Heart left ventricle (tissue), 16 donors: ENCODE measurements at regions of chr5 and their contacts with region 1.

Region 1: GRCh38 chr5:671459-672328 is 21.5 kb downstream of the TPPP start:
- DNase-seq: peak; percentile 68 to 86 (median 80)
- ATAC-seq: peak; percentile 52 to 85 (median 73)
- H3K4me3 ChIP-seq: peak overlapping the region in 6 of 12 donors; percentile 2 to 35 (median 20)
- H3K27ac ChIP-seq: peak overlapping the region in 7 of 12 donors; percentile 31 to 85 (median 73)
- H3K4me1 ChIP-seq: peaks cover 12 to 56% (median 35%) of the 10 kb centered on the region in 12 donors
- H3K27me3 ChIP-seq: peaks cover 0 to 5% (median 0%) of the 10 kb centered on the region in 9 donors
- CTCF ChIP-seq: peak; percentile 86 to 97 (median 95)
- POLR2A ChIP-seq: no peak

Region 2: DNA sequence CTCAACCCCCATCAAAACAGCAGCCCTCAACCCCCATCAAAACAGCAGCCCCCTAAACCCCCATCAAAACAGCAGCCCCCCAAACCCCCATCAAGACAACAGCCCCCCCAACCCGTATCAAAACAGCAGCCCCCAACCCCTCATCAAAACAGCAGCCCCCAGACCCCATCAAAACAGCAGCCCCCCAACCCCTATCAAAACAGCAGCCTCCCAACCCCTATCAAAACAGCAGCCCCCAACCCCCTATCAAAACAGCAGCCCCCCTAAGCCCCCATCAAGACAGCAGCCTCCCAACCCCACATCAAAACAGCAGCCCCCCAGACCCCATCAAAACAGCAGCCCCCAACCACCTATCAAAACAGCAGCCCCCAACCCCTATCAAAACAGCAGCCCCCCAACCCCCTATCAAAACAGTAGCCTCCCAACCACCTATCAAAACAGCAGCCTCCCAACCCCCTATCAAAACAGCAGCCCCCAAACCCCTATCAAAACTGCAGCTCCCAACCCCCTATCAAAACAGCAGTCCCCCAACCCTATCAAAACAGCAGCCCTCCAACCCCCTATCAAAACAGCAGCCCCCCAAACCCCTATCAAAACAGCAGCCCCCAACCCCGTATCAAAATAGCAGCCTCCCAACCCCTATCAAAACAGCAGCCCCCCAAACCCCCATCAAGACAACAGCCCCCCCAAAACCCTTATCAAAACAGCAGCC is 20.3 kb after region 1 on chr5:
- intact Hi-C with region 1: loop called in 1 of 10 experiments (anchors 2 kb)
- DNase-seq: no peak
- ATAC-seq: no peak
- H3K4me3 ChIP-seq: peak overlapping the region in 11 of 12 donors; percentile 45 to 76 (median 60)
- H3K27ac ChIP-seq: peak overlapping the region in 3 of 12 donors; percentile 71 to 86 (median 86)
- H3K4me1 ChIP-seq: peaks cover 0 to 5% (median 0%) of the 10 kb centered on the region in 12 donors
- H3K27me3 ChIP-seq: no peaks in the 10 kb centered on the region
- CTCF ChIP-seq: no peak
- POLR2A ChIP-seq: no peak

Region 3: GRCh38 chr5:759111-759751 is 87.5 kb after region 1 on chr5:
- intact Hi-C with region 1: loop called in 4 of 10 experiments (anchors 5 kb)
- DNase-seq: peak; percentile 82 to 96 (median 89)
- ATAC-seq: peak; percentile 68 to 82 (median 72)
- H3K4me3 ChIP-seq: peak overlapping the region in 10 of 12 donors; percentile 2 to 38 (median 20)
- H3K27ac ChIP-seq: peak overlapping the region; percentile 29 to 95 (median 83)
- H3K4me1 ChIP-seq: peaks cover 5 to 61% (median 37%) of the 10 kb centered on the region in 12 donors
- H3K27me3 ChIP-seq: no peaks in the 10 kb centered on the region
- CTCF ChIP-seq: peak in 4 of 12 donors; percentile 5 to 35 (median 13)
- POLR2A ChIP-seq: peak in 1 of 2 donors; percentile 25

Region 4: GRCh38 chr5:776792-777711 is 105.4 kb after region 1 on chr5:
- intact Hi-C with region 1: loop called in 1 of 10 experiments (anchors 10 kb)
- DNase-seq: peak in 2 of 5 donors; percentile 29 to 53
- ATAC-seq: no peak
- H3K4me3 ChIP-seq: no peak overlapping the region
- H3K27ac ChIP-seq: peak overlapping the region in 1 of 12 donors; percentile 4
- H3K4me1 ChIP-seq: peaks cover 0 to 41% (median 1%) of the 10 kb centered on the region in 12 donors
- H3K27me3 ChIP-seq: no peaks in the 10 kb centered on the region
- CTCF ChIP-seq: no peak
- POLR2A ChIP-seq: no peak

Region 5: GRCh38 chr5:885529-885928 is 213.8 kb after region 1 on chr5:
- intact Hi-C with region 1: loop called in 1 of 10 experiments (anchors 5 kb)
- DNase-seq: peak; percentile 77 to 92 (median 85)
- ATAC-seq: peak; percentile 93 to 97 (median 96)
- H3K4me3 ChIP-seq: no peak overlapping the region
- H3K27ac ChIP-seq: peak overlapping the region in 5 of 12 donors; percentile 18 to 56 (median 42)
- H3K4me1 ChIP-seq: peaks cover 0 to 16% (median 3%) of the 10 kb centered on the region in 12 donors
- H3K27me3 ChIP-seq: no peaks in the 10 kb centered on the region
- CTCF ChIP-seq: no peak
- POLR2A ChIP-seq: no peak

Region 6: GRCh38 chr5:902129-902916 is 230.6 kb after region 1 on chr5:
- intact Hi-C with region 1: loop called (anchors 2 to 5 kb)
- DNase-seq: no peak
- ATAC-seq: no peak
- H3K4me3 ChIP-seq: no peak overlapping the region
- H3K27ac ChIP-seq: no peak overlapping the region
- H3K4me1 ChIP-seq: peaks cover 0 to 4% (median 0%) of the 10 kb centered on the region in 12 donors
- H3K27me3 ChIP-seq: no peaks in the 10 kb centered on the region
- CTCF ChIP-seq: no peak
- POLR2A ChIP-seq: no peak